ENCODE measurements at regions of chr22 and their contacts with region 1.

Region 1: GRCh38 chr22:37267135-37267587 is 15.1 kb upstream of the CYTH4 start:
- DNase-seq: peak; percentile 79
- ATAC-seq: peak; percentile 85
- H3K4me3 Mint-ChIP-seq: peak overlapping the region; percentile 76
- H3K27ac Mint-ChIP-seq: peak overlapping the region; percentile 86
- H3K4me1 Mint-ChIP-seq: peaks cover 37% of the 10 kb centered on the region
- H3K27me3 Mint-ChIP-seq: peaks cover 12% of the 10 kb centered on the region

Region 2: GRCh38 chr22:37212167-37212906 is 54.8 kb before region 1 on chr22 and contains the start of gene SSTR3:
- CTCF ChIA-PET with region 1: no interaction called
- POLR2A ChIA-PET with region 1: no interaction called
- DNase-seq: no peak
- ATAC-seq: no peak
- H3K4me3 Mint-ChIP-seq: no peak within 1 kb of the TSS
- H3K27ac Mint-ChIP-seq: no peak within 1 kb of the TSS
- H3K4me1 Mint-ChIP-seq: peaks cover 31% of the 10 kb centered on the region
- H3K27me3 Mint-ChIP-seq: no peaks in the 10 kb centered on the region
- total RNA-seq, gene SSTR3: 3.5 to 3.6 TPM

Region 3: GRCh38 chr22:37237371-37238268 is 29.5 kb before region 1 on chr22:
- CTCF ChIA-PET with region 1: interaction called, 195 read pairs
- POLR2A ChIA-PET with region 1: interaction called, 12 read pairs
- DNase-seq: no peak
- ATAC-seq: no peak
- H3K4me3 Mint-ChIP-seq: peak overlapping the region; percentile 99
- H3K27ac Mint-ChIP-seq: peak overlapping the region; percentile 99
- H3K4me1 Mint-ChIP-seq: peaks cover 88% of the 10 kb centered on the region
- H3K27me3 Mint-ChIP-seq: no peaks in the 10 kb centered on the region

Region 4: GRCh38 chr22:37282385-37282677 is 15.2 kb after region 1 on chr22 and contains the start of gene CYTH4:
- CTCF ChIA-PET with region 1: interaction called, 29 read pairs
- POLR2A ChIA-PET with region 1: interaction called, 6 read pairs
- DNase-seq: peak; percentile 86
- ATAC-seq: peak; percentile 89
- H3K4me3 Mint-ChIP-seq: peak within 1 kb of the TSS; percentile 84
- H3K27ac Mint-ChIP-seq: peak within 1 kb of the TSS; percentile 98
- H3K4me1 Mint-ChIP-seq: peaks cover 70% of the 10 kb centered on the region
- H3K27me3 Mint-ChIP-seq: peaks cover 7% of the 10 kb centered on the region
- total RNA-seq, gene CYTH4: 107 to 114 TPM

Region 5: GRCh38 chr22:37309211-37310074 is 42.3 kb after region 1 on chr22:
- CTCF ChIA-PET with region 1: interaction called, 19 read pairs
- POLR2A ChIA-PET with region 1: interaction called, 8 read pairs
- DNase-seq: peak; percentile 86
- ATAC-seq: peak; percentile 48
- H3K4me3 Mint-ChIP-seq: peak overlapping the region; percentile 45
- H3K27ac Mint-ChIP-seq: peak overlapping the region; percentile 96
- H3K4me1 Mint-ChIP-seq: peaks cover 95% of the 10 kb centered on the region
- H3K27me3 Mint-ChIP-seq: no peaks in the 10 kb centered on the region

Region 6: DNA sequence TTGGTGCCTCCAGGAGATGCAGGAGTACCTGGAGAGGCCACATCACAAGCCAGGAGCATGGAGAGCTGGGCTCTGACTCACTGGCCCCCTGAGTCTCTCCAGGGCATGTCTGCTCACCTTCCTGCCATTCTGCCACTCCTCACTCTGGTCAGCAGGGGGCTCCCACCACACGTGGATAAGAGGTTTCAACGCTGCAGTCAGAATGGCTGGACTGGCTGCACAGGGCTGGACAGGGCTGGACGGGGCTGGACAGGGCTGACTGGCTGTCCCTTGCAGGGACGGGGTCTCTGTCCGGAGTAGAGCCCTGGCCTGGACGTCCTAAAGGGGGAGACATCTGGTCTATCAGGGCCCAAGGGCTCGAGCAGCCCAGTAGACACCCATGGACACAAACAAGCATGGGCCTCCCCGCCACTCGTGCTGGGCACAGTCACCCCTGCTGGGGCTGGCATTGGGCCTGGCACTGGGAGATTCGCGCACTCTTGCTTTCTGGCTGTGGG is 49.8 kb after region 1 on chr22:
- CTCF ChIA-PET with region 1: interaction called, 25 read pairs
- POLR2A ChIA-PET with region 1: interaction called, 5 read pairs
- DNase-seq: peak; percentile 84
- ATAC-seq: peak; percentile 85
- H3K4me3 Mint-ChIP-seq: no peak overlapping the region
- H3K27ac Mint-ChIP-seq: peak overlapping the region; percentile 30
- H3K4me1 Mint-ChIP-seq: peaks cover 47% of the 10 kb centered on the region
- H3K27me3 Mint-ChIP-seq: peaks cover 7% of the 10 kb centered on the region

Region 7: GRCh38 chr22:37345863-37346504 is 78.8 kb after region 1 on chr22:
- CTCF ChIA-PET with region 1: no interaction called
- POLR2A ChIA-PET with region 1: no interaction called
- DNase-seq: no peak
- ATAC-seq: no peak
- H3K4me3 Mint-ChIP-seq: no peak overlapping the region
- H3K27ac Mint-ChIP-seq: no peak overlapping the region
- H3K4me1 Mint-ChIP-seq: no peaks in the 10 kb centered on the region
- H3K27me3 Mint-ChIP-seq: peaks cover 5% of the 10 kb centered on the region

Region 8: GRCh38 chr22:37401401-37402183 is 134.4 kb after region 1 on chr22:
- CTCF ChIA-PET with region 1: no interaction called
- POLR2A ChIA-PET with region 1: no interaction called
- DNase-seq: no peak
- ATAC-seq: no peak
- H3K4me3 Mint-ChIP-seq: no peak overlapping the region
- H3K27ac Mint-ChIP-seq: no peak overlapping the region
- H3K4me1 Mint-ChIP-seq: peaks cover 2% of the 10 kb centered on the region
- H3K27me3 Mint-ChIP-seq: peaks cover 5% of the 10 kb centered on the region

Region 9: DNA sequence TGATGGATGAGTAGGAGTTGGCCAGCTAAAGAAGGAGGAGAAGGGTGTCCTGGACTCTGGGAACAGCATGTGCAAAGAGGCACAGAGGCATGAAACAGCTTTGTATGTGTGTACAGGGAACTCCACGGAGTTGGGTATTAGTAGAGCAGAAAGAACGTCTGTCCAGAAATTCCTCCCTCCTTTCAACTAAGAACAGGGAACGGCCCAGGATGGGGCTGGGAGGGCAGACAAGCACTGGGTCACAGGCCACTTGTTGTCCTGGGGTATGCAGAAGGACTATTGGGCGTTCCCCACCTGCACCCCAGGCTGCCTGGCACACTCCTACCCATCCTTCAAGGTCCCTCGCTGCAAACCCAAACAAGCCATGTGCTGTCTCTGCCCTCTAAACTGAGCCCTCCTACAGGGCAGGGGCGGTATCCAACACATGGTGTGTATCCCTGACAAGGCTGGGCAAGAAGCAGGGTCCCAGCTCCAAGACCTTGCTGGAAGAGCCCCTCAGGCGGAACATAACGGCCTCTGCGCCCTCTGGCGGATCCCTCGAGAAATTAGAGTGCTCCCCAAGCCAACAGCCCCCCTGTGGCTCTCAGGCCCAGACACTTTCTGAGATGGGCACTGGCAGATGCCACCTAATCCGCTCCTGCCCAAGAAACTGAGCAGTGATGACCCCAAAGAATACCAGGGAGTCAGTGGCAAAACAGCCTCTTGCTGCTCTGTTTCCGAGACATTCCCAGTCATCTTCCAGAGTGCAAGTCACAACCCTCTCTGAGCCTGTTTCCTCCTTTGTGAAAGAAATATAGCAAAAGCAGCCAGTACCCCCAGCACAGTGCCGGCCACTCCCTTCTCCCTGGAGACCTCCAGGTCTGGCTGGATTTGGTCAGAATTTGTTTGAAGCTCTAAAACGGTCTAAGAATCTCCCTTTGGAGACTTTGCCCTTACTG is 161.8 kb after region 1 on chr22:
- CTCF ChIA-PET with region 1: interaction called, 12 read pairs
- POLR2A ChIA-PET with region 1: no interaction called
- DNase-seq: peak; percentile 71
- ATAC-seq: peak; percentile 66
- H3K4me3 Mint-ChIP-seq: no peak overlapping the region
- H3K27ac Mint-ChIP-seq: no peak overlapping the region
- H3K4me1 Mint-ChIP-seq: peaks cover 21% of the 10 kb centered on the region
- H3K27me3 Mint-ChIP-seq: peaks cover 54% of the 10 kb centered on the region

Region 10: GRCh38 chr22:37457093-37457893 is 190.1 kb after region 1 on chr22:
- CTCF ChIA-PET with region 1: interaction called, 10 read pairs
- POLR2A ChIA-PET with region 1: interaction called, 3 read pairs
- DNase-seq: peak; percentile 89
- ATAC-seq: peak; percentile 98
- H3K4me3 Mint-ChIP-seq: no peak overlapping the region
- H3K27ac Mint-ChIP-seq: no peak overlapping the region
- H3K4me1 Mint-ChIP-seq: peaks cover 5% of the 10 kb centered on the region
- H3K27me3 Mint-ChIP-seq: no peaks in the 10 kb centered on the region

Measured in activated CD8-positive, alpha-beta T cell treated with anti-CD3 and anti-CD28 coated beads, Interleukin-2, amount 10 ng/mL, durations not matched to agents 7 days and 5 days (primary cell).